GM23248 (cell line): ENCODE measurements at regions of chr12 and their contacts with region 1.

Region 1: GRCh38 chr12:31659087-31659933 is at the start of gene ETFBKMT:
- DNase-seq: peak; percentile 92
- H3K4me3 ChIP-seq: peak within 1 kb of the TSS; percentile 93
- H3K27ac ChIP-seq: peak within 1 kb of the TSS; percentile 83
- H3K4me1 ChIP-seq: no peaks in the 10 kb centered on the region; the same call in 1 of the 2 replicates
- H3K27me3 ChIP-seq: no peaks in the 10 kb centered on the region
- total RNA-seq, gene ETFBKMT: 1.8 and 3.4 TPM in 2 replicates

Region 2: DNA sequence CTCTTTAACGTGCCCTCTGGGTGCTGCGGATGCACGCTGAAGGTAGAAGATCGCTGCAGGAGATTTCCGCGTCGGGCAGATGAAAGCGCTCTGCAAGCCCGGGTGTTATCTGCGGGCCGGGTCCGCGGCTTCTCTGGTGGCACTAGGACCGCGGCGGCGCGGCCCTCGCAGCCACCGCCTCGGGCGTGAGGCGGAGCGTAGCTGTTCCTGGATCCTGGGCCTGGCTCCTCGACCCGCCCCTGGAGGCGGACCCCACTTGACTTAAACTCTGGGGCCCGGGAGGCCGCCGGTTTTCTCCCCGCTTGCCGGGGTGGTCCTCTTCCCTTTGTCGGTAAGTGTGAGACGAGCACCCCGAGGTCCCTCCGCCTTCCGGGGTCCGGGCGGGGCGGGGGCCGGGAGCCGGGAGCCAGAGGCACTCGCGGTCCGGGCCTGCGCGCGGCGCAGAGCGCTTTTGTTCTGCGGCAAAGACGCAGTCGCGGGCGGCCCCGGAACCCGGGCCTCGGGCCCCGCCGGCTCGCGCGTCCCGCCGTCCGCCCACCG is 299.9 kb after region 1 on chr12 and contains the start of gene RESF1:
- in situ Hi-C with region 1: loop called (anchors 25 kb)
- DNase-seq: peak; percentile 92
- H3K4me3 ChIP-seq: peak within 1 kb of the TSS; percentile 100
- H3K27ac ChIP-seq: peak within 1 kb of the TSS; percentile 70
- H3K4me1 ChIP-seq: peaks cover 10% of the 10 kb centered on the region
- H3K27me3 ChIP-seq: no peaks in the 10 kb centered on the region
- total RNA-seq, gene RESF1: 6.3 and 8.3 TPM in 2 replicates

Region 3: DNA sequence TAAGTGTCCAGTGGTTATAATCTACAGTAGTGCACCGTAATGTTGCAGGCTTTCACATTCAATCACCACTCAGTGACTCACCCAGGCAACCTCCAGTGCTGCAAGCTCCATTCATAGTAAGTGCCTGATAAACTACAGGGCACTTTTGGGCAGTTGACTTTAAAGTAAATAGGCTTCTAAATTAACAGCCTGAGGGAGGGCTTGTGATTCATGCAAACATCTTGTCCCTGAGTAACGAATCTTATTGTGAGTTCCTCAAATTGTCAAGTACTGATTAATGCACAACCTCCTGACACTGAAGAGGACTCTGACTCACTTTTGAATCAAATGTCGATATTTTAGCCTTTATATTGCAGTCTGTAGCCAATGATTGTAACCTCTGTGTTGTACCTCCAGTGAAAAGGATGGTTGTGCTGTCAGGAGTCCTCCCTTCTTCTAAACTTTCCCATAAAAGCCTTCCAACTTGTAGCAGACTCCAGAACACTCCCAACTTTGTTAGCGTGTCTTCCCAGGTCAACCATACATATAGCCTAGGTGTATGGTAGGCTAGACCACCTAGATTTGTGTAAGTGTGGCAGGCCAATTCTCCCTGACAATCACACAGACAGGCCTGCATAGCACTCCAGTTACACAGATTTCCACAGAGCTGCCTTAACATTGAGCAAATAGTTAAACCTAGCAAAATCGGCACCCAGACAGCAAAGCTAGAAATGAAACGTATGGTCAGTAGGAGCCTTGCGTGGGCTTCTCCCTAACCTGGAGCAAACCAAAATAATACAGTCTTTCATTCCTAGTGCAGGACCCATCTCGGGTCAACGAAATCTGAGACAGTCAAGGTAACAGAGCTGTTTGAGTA is 392.5 kb after region 1 on chr12:
- in situ Hi-C with region 1: loop called (anchors 10 kb)
- DNase-seq: peak; percentile 95
- H3K4me3 ChIP-seq: no peak overlapping the region
- H3K27ac ChIP-seq: peak overlapping the region; percentile 66
- H3K4me1 ChIP-seq: peaks cover 12% of the 10 kb centered on the region
- H3K27me3 ChIP-seq: no peaks in the 10 kb centered on the region

Region 4: GRCh38 chr12:32302218-32303173 is 643.2 kb after region 1 on chr12:
- in situ Hi-C with region 1: loop called (anchors 10 kb)
- DNase-seq: peak; percentile 45
- H3K4me3 ChIP-seq: no peak overlapping the region
- H3K27ac ChIP-seq: no peak overlapping the region
- H3K4me1 ChIP-seq: no peaks in the 10 kb centered on the region
- H3K27me3 ChIP-seq: no peaks in the 10 kb centered on the region

Region 5: DNA sequence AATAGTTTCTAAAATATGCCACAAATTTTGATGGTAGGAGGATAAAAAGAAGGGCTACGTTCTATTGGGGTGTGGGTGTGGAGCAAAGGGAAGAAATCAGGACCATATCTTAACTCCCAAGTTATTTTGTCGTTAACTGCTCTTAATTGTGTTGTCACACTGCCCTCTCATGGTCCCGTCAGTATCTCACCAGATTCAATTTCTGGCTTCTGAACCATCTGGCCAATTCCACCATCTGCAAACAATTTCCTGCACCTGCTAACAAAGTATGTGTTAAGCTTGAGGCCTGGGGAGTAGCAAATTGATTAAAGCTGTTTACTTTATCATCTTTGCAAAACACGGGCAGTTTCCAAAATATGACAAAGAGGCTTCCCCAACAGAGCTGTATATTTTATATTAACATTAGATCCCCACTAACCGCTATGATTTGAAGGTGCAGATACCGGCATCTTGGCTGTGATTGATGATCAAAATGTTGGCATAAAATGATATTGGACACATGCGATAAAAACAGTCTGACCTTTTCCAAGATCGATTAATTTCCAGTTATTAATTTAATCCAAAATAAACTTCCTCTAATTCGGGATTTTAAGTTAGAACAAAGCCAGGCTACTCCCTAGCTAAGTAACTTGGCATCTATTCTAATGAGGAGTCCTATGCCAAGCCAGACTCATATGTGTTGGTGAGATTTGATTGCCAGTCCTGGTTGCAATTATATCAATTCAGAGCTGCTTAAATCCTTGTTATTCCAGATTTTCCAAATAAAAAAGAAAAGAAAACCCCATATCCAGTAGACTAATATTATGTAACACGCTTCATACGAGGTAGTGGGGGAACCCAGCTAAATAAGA is 1012.8 kb after region 1 on chr12:
- in situ Hi-C with region 1: loop called (anchors 25 kb)
- DNase-seq: peak; percentile 85
- H3K4me3 ChIP-seq: no peak overlapping the region
- H3K27ac ChIP-seq: no peak overlapping the region
- H3K4me1 ChIP-seq: peaks cover 8% of the 10 kb centered on the region; the same call in 1 of the 2 replicates
- H3K27me3 ChIP-seq: no peaks in the 10 kb centered on the region